PC-3 (cell line): ENCODE measurements at regions of chr2 and their contacts with region 1.

Region 1: DNA sequence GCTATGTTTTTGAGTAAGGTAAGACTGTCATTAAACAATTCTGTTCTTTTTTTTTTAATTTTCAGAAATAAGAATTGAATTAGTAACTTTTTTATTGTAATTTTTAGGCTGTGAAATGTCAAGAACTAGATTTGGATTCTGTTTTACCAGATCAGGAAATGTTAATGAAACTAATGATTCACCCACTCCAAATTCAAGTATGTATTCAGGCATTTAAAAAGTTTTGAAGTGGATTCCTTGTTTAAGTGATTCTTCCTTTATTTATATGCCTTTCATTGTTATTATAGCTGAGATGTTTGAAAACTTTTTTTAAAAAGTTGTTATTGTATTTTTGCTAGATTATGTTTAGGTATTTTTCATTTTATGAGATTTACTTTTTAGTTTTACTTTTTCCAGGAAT is 96.7 kb downstream of the UBR3 start:
- DNase-seq: no peak
- ATAC-seq: no peak
- H3K4me3 ChIP-seq: no peak overlapping the region
- H3K27ac ChIP-seq: no peak overlapping the region
- H3K4me1 ChIP-seq: no peaks in the 10 kb centered on the region
- H3K27me3 ChIP-seq: no peaks in the 10 kb centered on the region
- CTCF ChIP-seq: no peak

Region 2: GRCh38 chr2:169887120-169887519 is 36.9 kb before region 1 on chr2:
- CTCF ChIA-PET with region 1: no interaction called
- POLR2A ChIA-PET with region 1: no interaction called
- intact Hi-C with region 1: loop called (anchors 5 kb)
- DNase-seq: no peak
- ATAC-seq: no peak
- H3K4me3 ChIP-seq: no peak overlapping the region
- H3K27ac ChIP-seq: no peak overlapping the region
- H3K4me1 ChIP-seq: peaks cover 15% of the 10 kb centered on the region
- H3K27me3 ChIP-seq: no peaks in the 10 kb centered on the region
- CTCF ChIP-seq: no peak